ENCODE measurements at regions of chr11 and their contacts with region 1.

Region 1: DNA sequence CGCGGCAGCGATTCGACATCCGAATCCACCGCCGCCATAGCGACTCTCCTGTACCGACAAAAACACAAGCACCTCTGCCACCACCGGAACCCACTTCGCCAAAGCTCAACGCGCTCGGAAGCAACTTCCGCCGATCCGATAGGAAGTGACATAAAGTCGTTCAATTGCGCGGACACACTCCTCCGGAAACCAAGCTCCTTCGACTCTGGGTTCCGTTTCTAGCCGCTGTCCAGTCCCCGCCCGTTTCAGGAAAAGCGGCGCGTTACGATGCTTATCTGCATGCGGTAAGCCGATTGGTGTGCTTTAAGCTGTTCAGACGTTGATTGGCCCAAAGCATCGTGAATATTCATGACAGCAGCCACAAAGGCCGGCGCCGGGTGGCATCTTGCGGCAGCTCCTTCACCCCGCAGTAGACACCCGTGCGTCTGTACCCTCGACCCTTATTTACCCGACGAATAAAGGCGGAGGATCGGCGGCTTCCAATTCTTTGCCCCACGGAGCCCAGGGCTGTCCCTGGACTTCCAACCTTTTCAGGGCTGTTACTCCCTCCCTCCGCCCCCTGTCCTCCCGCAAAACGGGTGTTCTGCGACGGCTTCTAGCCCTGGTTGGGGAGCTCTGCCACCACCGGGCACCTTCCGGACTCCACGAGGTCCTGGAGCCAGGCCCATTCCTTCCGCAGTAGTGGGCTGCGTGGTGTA is at the start of gene TUT1:
- DNase-seq: peak; percentile 96
- H3K4me3 Mint-ChIP-seq: peak within 1 kb of the TSS; percentile 99
- H3K27ac Mint-ChIP-seq: peak within 1 kb of the TSS; percentile 91
- H3K4me1 Mint-ChIP-seq: peaks cover 48% of the 10 kb centered on the region
- H3K27me3 Mint-ChIP-seq: no peaks in the 10 kb centered on the region
- total RNA-seq, gene TUT1: 38.7 and 40.7 TPM in 2 replicates

Region 2: GRCh38 chr11:62427630-62428233 is 163.9 kb before region 1 on chr11:
- intact Hi-C with region 1: loop called (anchors 1 kb)
- DNase-seq: peak; percentile 7
- H3K4me3 Mint-ChIP-seq: peak overlapping the region; percentile 55
- H3K27ac Mint-ChIP-seq: peak overlapping the region; percentile 96
- H3K4me1 Mint-ChIP-seq: peaks cover 46% of the 10 kb centered on the region
- H3K27me3 Mint-ChIP-seq: no peaks in the 10 kb centered on the region

Region 3: DNA sequence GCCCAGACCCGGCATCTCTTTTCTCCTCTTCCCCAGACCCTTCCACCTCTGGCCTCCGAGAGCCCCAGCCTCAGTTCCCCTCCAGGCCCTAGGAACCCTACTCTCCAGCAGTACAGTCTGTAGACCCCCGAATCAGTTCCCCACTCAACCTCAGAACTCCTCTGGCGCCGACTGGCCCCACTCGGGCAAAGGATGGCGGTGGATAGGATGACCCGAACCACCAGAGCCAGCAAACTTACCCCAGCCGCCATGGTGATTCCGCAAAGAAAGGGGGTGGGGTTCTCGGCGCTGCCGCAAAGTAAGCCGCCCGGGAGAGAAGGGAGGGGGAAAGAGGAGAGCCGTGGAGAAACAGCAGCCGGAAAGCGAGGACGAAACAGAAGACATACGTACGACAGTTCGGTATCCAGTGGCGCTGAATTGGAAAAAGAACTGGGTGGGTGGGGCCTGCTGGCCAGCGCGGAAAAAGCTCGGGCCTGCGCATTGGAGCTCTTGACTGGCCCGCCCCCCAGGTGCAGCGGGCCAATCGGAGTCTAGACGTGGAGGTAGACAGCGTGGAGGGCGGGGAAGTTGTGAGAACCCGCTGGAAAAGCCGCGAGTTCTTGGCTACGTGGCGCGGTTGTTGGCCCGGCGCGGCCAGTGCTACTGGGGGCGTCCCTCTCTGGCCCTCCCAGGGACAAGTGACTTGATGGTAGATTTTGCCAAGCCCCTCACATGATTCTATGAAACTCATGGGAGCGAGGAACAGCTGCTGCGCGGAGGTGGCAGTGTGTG is 17.8 kb before region 1 on chr11 and contains the start of gene EEF1G:
- intact Hi-C with region 1: loop called (anchors 1 kb)
- DNase-seq: peak; percentile 99
- H3K4me3 Mint-ChIP-seq: peak within 1 kb of the TSS; percentile 98
- H3K27ac Mint-ChIP-seq: peak within 1 kb of the TSS; percentile 92
- H3K4me1 Mint-ChIP-seq: peaks cover 37% of the 10 kb centered on the region
- H3K27me3 Mint-ChIP-seq: no peaks in the 10 kb centered on the region
- total RNA-seq, gene EEF1G: 1,154 and 1,169 TPM in 2 replicates

Region 4: DNA sequence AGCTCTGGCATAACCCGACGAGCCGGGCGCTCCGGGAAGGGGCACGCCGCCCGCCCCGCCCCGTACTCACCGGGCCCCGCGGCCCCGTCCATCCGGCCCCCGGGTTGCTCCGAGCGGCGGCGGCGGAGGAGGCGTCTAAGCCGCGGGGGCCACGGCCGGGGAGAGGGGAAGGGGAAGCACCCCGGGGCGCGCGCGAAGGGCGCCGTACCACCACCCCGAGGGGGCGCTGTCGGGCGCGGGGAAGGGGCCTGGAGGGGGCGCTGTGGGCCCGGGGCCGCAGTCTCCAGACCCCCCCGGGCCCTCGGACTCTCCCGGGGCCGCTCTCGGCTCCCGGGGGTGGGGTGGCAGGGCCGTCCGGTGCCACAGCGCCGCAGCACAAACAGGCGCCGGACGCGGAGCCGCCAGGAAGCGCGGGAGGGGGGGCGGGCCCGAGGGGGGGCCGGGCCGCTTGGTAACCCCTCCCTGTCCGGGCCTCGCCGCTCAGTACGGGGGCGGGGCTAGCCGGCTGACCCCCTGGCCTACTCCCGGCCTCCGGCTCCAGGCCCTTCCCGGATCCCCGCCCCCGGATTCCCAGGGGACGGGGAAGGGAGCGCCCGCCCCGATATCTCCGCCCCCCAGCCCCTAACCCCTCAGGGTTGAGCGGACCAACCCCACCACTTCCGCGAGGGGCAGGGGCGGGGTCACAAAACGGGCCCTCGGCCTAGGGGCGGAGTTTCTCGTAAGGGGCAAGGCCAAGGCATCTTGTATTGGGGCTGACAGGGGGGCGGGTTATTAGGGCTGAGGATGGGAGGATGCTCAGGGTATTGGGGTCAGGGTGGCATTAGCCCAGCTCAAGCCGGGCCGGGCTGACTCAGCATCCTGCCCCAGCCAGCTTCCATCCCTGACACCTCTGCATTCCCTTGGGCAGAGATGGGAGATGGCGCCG is 21.0 kb after region 1 on chr11 and contains the starts of genes EML3 and ROM1:
- intact Hi-C with region 1: no loop called
- DNase-seq: peak; percentile 85
- H3K4me3 Mint-ChIP-seq: peak within 1 kb of the TSS; percentile 96
- H3K27ac Mint-ChIP-seq: peak within 1 kb of the TSS; percentile 97
- H3K4me1 Mint-ChIP-seq: peaks cover 32% of the 10 kb centered on the region
- H3K27me3 Mint-ChIP-seq: no peaks in the 10 kb centered on the region
- total RNA-seq, gene EML3: 164 and 167 TPM in 2 replicates
- total RNA-seq, gene ROM1: 2.5 and 3.2 TPM in 2 replicates

Region 5: GRCh38 chr11:62652161-62653006 is 60.8 kb after region 1 on chr11:
- intact Hi-C with region 1: loop called (anchors 1 kb)
- DNase-seq: no peak
- H3K4me3 Mint-ChIP-seq: peak overlapping the region; percentile 99
- H3K27ac Mint-ChIP-seq: peak overlapping the region; percentile 95
- H3K4me1 Mint-ChIP-seq: peaks cover 25% of the 10 kb centered on the region
- H3K27me3 Mint-ChIP-seq: no peaks in the 10 kb centered on the region

Region 6: GRCh38 chr11:62694455-62695167 is 103.0 kb after region 1 on chr11:
- intact Hi-C with region 1: loop called (anchors 1 kb)
- DNase-seq: peak; percentile 61
- H3K4me3 Mint-ChIP-seq: no peak overlapping the region
- H3K27ac Mint-ChIP-seq: peak overlapping the region; percentile 71
- H3K4me1 Mint-ChIP-seq: peaks cover 8% of the 10 kb centered on the region
- H3K27me3 Mint-ChIP-seq: no peaks in the 10 kb centered on the region

Region 7: DNA sequence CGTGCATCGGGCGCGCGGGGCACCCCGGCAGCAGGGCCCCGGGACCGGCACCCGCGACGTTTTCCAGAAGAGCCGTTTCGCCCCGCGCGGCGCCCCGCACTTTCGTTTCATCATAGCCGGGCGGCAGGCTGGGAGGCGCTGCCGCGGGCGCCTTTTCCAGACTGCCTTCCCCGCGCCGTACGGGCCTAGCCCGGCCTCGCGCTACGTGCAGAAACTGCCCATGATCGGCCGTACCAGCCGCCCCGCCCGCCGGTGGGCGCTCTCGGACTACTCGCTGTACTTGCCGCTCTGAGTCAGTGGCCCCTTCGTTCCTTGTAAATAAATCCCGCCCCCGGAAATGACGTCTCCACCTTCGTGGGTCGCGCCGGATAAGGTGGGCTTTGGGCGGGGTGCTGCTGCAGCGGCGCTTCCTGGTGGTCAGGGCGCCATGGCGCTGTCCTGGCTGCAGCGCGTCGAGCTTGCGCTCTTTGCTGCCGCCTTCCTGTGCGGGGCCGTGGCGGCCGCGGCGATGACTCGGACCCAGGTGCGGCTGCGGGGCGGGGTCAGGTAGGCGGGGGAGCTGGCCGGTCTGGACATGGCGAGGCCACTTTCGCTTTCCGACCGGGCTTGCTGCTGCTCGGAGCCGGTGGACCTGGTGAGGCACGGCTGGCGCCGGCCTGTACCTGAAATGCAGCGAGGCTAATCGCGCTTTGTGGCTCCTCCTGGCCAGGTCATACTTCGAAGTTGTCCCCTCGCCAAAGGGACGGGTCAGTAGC is 195.6 kb after region 1 on chr11 and contains the start of gene TMEM179B:
- intact Hi-C with region 1: loop called (anchors 1 kb)
- DNase-seq: peak; percentile 96
- H3K4me3 Mint-ChIP-seq: peak within 1 kb of the TSS; percentile 95
- H3K27ac Mint-ChIP-seq: peak within 1 kb of the TSS; percentile 94
- H3K4me1 Mint-ChIP-seq: peaks cover 42% of the 10 kb centered on the region
- H3K27me3 Mint-ChIP-seq: no peaks in the 10 kb centered on the region
- total RNA-seq, gene TMEM179B: 40.6 and 43.0 TPM in 2 replicates

Region 8: GRCh38 chr11:64240394-64241174 is 1649.0 kb after region 1 on chr11 and contains the start of gene FKBP2:
- intact Hi-C with region 1: loop called (anchors 5 kb)
- DNase-seq: peak; percentile 99
- H3K4me3 Mint-ChIP-seq: peak within 1 kb of the TSS; percentile 94
- H3K27ac Mint-ChIP-seq: peak within 1 kb of the TSS; percentile 94
- H3K4me1 Mint-ChIP-seq: peaks cover 36% of the 10 kb centered on the region
- H3K27me3 Mint-ChIP-seq: no peaks in the 10 kb centered on the region
- total RNA-seq, gene FKBP2: 32.6 and 34.3 TPM in 2 replicates

Measured in activated T-helper 1 cell treated with anti-CD3 and anti-CD28 coated beads, Interleukin-12 subunit alpha, Interleukin-12 subunit beta, Interleukin-2, Interleukin-4 antibody, amounts not matched to agents 30 ng/mL and 10 ng/mL and 1 ng/mL, durations not matched to agents 14 hours and 24 hours and 36 hours (primary cell).